Psoas muscle (tissue), 8 donors: ENCODE measurements at regions of chr20 and their contacts with region 1.

Region 1: GRCh38 chr20:50987592-50988210 is 29.1 kb downstream of the MOCS3 start:
- DNase-seq: peak in 1 of 2 donors; percentile 31
- ATAC-seq: peak; percentile 89 to 95 (median 92)
- H3K4me3 ChIP-seq: no peak overlapping the region
- H3K27ac ChIP-seq: no peak overlapping the region
- H3K4me1 ChIP-seq: no peaks in the 10 kb centered on the region
- H3K27me3 ChIP-seq: peaks cover 2 to 18% (median 4%) of the 10 kb centered on the region in 3 donors
- CTCF ChIP-seq: peak; percentile 92

Region 2: GRCh38 chr20:51306503-51307358 is 319.0 kb after region 1 on chr20:
- intact Hi-C with region 1: loop called (anchors 1 to 2 kb)
- DNase-seq: peak; percentile 66 to 83
- ATAC-seq: peak; percentile 85 to 96 (median 92)
- H3K4me3 ChIP-seq: no peak overlapping the region
- H3K27ac ChIP-seq: no peak overlapping the region
- H3K4me1 ChIP-seq: no peaks in the 10 kb centered on the region
- H3K27me3 ChIP-seq: peaks cover 0 to 1% (median 0%) of the 10 kb centered on the region in 3 donors
- CTCF ChIP-seq: peak; percentile 90

Region 3: GRCh38 chr20:51595058-51595532 is 607.4 kb after region 1 on chr20:
- intact Hi-C with region 1: loop called in 1 of 2 experiments (anchors 10 kb)
- DNase-seq: peak; percentile 83 to 92
- ATAC-seq: peak; percentile 92 to 100 (median 97)
- H3K4me3 ChIP-seq: no peak overlapping the region
- H3K27ac ChIP-seq: no peak overlapping the region
- H3K4me1 ChIP-seq: peaks cover 5% of the 10 kb centered on the region
- H3K27me3 ChIP-seq: no peaks in the 10 kb centered on the region
- CTCF ChIP-seq: peak; percentile 91

Region 4: DNA sequence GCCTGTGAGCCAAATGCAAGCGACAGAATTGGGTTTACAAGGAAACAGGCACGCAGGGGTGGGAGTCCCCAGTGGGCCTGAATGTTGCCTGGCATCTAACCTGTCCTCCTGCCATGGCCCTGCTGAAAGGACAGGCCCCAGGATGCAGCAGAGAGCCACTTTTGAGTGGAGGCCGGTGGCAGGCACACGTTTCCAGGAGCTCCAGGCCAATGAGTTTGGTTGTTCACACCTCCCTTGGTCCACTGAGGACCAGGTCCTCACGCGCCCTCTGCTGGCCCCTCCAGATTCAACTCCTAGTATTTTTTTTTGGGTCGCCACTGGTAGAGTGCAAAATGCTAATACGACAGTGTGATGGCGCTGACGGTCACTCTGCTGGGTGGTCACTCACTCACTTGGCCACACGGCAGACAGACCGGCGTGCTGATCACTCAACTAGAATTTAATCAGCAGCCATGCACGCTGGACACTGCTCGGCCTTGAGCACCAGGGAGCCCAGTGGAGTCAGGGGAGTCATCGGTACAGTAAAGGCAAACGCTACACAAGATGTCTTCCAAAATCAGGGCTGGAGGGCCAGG is 636.5 kb after region 1 on chr20:
- intact Hi-C with region 1: loop called in 1 of 2 experiments (anchors 10 kb)
- DNase-seq: peak; percentile 41 to 63
- ATAC-seq: peak; percentile 27 to 59 (median 40)
- H3K4me3 ChIP-seq: no peak overlapping the region
- H3K27ac ChIP-seq: no peak overlapping the region
- H3K4me1 ChIP-seq: no peaks in the 10 kb centered on the region
- H3K27me3 ChIP-seq: no peaks in the 10 kb centered on the region
- CTCF ChIP-seq: peak; percentile 50